Activated CD4-positive, alpha-beta T cell treated with anti-CD3 and anti-CD28 coated beads, Interleukin-2, amount 10 ng/mL, durations not matched to agents 24 days and 14 days (primary cell): ENCODE measurements at regions of chr9 and their contacts with region 1.

Region 1: DNA sequence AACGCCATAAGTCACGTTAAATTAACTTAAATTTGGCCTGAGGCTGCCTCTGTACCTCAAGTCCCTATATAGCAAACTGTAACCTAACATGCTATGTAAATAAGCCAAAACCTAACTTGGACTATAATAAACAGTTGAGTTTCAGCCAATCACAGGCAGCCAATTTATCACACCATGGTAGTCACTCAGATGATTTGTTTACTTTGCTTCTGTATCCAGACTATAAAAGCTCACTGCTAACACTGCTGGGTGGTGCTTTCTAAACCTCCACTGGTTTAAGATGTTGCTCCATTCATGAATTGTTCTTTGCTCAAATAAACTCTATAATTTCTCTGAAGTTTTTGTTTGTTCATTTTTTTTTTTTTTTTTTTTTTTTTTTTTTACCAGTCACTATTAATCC is 62.8 kb downstream of the TRPM3 start:
- DNase-seq: no peak
- H3K4me3 Mint-ChIP-seq: no peak overlapping the region
- H3K27ac Mint-ChIP-seq: no peak overlapping the region
- H3K4me1 Mint-ChIP-seq: no peaks in the 10 kb centered on the region
- H3K27me3 Mint-ChIP-seq: no peaks in the 10 kb centered on the region

Region 2: GRCh38 chr9:70935856-70936255 is 122.8 kb before region 1 on chr9:
- intact Hi-C with region 1: no loop called
- DNase-seq: no peak
- H3K4me3 Mint-ChIP-seq: no peak overlapping the region
- H3K27ac Mint-ChIP-seq: no peak overlapping the region
- H3K4me1 Mint-ChIP-seq: no peaks in the 10 kb centered on the region
- H3K27me3 Mint-ChIP-seq: no peaks in the 10 kb centered on the region

Region 3: DNA sequence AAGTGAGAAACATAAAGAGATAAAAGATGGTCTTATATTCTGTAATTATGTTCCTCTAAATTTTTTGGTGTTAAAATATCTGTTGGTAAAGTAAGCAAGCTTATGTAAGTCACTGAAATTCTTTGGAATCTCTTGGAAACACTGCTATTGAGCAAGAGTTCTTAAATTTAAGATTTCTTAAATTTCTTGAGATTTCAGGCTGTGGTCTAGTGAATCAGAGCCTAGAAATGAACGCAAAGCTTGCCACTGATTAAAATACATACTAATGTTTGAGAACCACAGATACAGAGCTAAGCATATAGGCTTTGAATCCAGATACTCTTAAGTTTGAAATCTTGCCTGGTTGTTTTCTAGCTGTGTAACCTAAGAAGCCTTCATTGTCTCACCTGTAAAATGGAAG is 70.7 kb before region 1 on chr9:
- intact Hi-C with region 1: loop called (anchors 10 kb)
- DNase-seq: no peak
- H3K4me3 Mint-ChIP-seq: no peak overlapping the region
- H3K27ac Mint-ChIP-seq: no peak overlapping the region
- H3K4me1 Mint-ChIP-seq: no peaks in the 10 kb centered on the region
- H3K27me3 Mint-ChIP-seq: no peaks in the 10 kb centered on the region

Region 4: GRCh38 chr9:71010258-71010657 is 48.4 kb before region 1 on chr9:
- intact Hi-C with region 1: no loop called
- DNase-seq: no peak
- H3K4me3 Mint-ChIP-seq: no peak overlapping the region
- H3K27ac Mint-ChIP-seq: no peak overlapping the region
- H3K4me1 Mint-ChIP-seq: no peaks in the 10 kb centered on the region
- H3K27me3 Mint-ChIP-seq: no peaks in the 10 kb centered on the region

Region 5: GRCh38 chr9:71270554-71270953 is 211.9 kb after region 1 on chr9:
- intact Hi-C with region 1: no loop called
- DNase-seq: no peak
- H3K4me3 Mint-ChIP-seq: no peak overlapping the region
- H3K27ac Mint-ChIP-seq: no peak overlapping the region
- H3K4me1 Mint-ChIP-seq: no peaks in the 10 kb centered on the region
- H3K27me3 Mint-ChIP-seq: peaks cover 2% of the 10 kb centered on the region